Heart left ventricle (tissue), 16 donors: ENCODE measurements at regions of chrX and their contacts with region 1.

Region 1: DNA sequence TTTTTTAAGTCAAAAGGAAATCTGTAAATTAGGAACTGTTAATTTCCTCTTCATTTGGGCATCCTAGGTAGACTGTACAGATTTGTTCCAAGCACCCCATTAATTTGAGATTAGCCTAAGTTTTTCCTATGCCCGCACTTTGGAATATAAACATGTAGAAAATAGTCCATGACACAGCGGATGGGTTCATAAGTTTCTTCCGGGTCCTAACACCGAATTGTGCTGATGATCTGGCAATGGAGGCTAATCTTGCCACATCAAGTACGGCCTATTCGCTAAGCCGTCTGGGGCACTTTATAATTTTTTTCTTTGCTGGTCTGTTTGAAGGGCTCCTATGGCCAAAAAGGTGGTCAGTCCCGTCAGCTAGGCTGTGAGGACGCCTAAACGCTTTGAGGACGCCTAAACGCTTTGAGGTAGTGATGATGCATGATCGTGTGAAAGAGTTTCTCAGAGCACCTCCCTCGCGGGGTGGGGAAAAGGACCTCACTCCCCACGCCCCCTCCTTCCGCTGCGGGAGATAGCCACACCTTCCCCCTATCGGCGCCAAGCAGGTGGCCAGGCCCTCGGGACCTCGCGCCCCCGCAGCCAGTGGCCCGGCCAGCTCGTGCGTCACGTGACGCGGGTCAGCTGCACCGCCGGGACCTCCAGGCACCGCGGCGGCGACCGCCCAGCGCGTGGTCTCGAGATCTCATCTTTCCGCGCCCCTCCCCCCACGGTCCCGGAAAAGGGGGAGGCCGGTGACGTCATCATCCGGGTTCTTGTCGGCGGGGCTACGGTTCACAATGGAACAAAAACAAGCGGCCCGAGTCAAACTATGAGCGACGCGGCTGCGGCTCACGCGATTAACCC is 977 bp upstream of the USP9X start:
- DNase-seq: peak; percentile 95 to 99 (median 96)
- ATAC-seq: peak; percentile 85 to 89 (median 88)
- H3K4me3 ChIP-seq: peak overlapping the region; percentile 52 to 99 (median 90)
- H3K27ac ChIP-seq: peak overlapping the region; percentile 90 to 100 (median 99)
- H3K4me1 ChIP-seq: peaks cover 0 to 35% (median 13%) of the 10 kb centered on the region in 12 donors
- H3K27me3 ChIP-seq: peaks cover 0 to 6% (median 0%) of the 10 kb centered on the region in 9 donors
- CTCF ChIP-seq: no peak
- POLR2A ChIP-seq: peak in 1 of 2 donors; percentile 76

Region 2: GRCh38 chrX:40735325-40736169 is 348.7 kb before region 1 on chrX and contains the start of gene MED14:
- intact Hi-C with region 1: loop called in 1 of 10 experiments (anchors 5 kb)
- DNase-seq: peak; percentile 88 to 92 (median 89)
- ATAC-seq: peak; percentile 98 to 99 (median 98)
- H3K4me3 ChIP-seq: peak within 1 kb of the TSS; percentile 40 to 97 (median 80)
- H3K27ac ChIP-seq: peak within 1 kb of the TSS; percentile 91 to 100 (median 94)
- H3K4me1 ChIP-seq: peaks cover 0 to 28% (median 7%) of the 10 kb centered on the region in 12 donors
- H3K27me3 ChIP-seq: peaks cover 0 to 50% (median 0%) of the 10 kb centered on the region in 9 donors
- CTCF ChIP-seq: peak; percentile 35 to 61 (median 42)
- POLR2A ChIP-seq: peak in 1 of 2 donors; percentile 38
- total RNA-seq, gene MED14: 17.5 to 40.9 (median 27.4) TPM

Region 3: DNA sequence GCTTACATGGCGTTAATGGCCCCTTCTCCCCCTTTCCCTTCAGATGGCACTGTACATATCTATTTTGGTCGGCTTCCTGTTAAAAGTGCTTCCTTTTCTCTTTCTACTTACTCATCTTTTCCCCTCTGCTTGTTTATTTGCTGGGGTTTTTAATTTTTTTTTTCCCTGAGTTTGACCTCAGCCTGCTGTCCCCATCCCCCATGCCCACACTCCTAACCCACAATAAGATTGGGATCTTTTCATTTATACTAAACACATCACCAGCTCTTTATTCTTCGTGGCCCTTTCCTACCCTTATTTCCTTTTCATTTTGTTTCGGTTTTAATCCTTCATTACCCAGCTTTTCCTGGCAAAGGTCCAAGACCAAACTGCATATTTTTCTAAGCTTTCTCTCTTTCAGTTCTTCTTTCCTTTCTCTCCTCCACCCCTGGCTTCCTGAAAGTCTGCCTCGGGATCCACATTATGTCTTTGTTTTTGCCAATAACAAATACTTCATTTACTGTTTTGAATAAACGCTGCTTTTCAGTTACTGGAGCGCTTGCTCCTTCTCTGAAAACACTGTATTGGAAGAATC is 151.0 kb before region 1 on chrX:
- intact Hi-C with region 1: loop called in 1 of 10 experiments (anchors 10 kb)
- DNase-seq: peak in 2 of 5 donors; percentile 21 to 30
- ATAC-seq: peak in 2 of 4 donors; percentile 29 to 60
- H3K4me3 ChIP-seq: peak overlapping the region in 7 of 12 donors; percentile 12 to 43 (median 26)
- H3K27ac ChIP-seq: peak overlapping the region in 10 of 12 donors; percentile 6 to 91 (median 59)
- H3K4me1 ChIP-seq: peaks cover 0 to 28% (median 0%) of the 10 kb centered on the region in 12 donors
- H3K27me3 ChIP-seq: peaks cover 0 to 3% (median 0%) of the 10 kb centered on the region in 9 donors
- CTCF ChIP-seq: no peak
- POLR2A ChIP-seq: no peak

Region 4: GRCh38 chrX:41010188-41010846 is 74.0 kb before region 1 on chrX:
- intact Hi-C with region 1: loop called in 8 of 10 experiments (anchors 1 to 10 kb)
- DNase-seq: peak; percentile 79 to 87 (median 86)
- ATAC-seq: peak; percentile 89 to 97 (median 96)
- H3K4me3 ChIP-seq: peak overlapping the region in 10 of 12 donors; percentile 20 to 52 (median 44)
- H3K27ac ChIP-seq: peak overlapping the region; percentile 63 to 94 (median 86)
- H3K4me1 ChIP-seq: peaks cover 0 to 21% (median 7%) of the 10 kb centered on the region in 12 donors
- H3K27me3 ChIP-seq: peaks cover 0 to 29% (median 0%) of the 10 kb centered on the region in 9 donors
- CTCF ChIP-seq: peak in 7 of 12 donors; percentile 14 to 39 (median 25)
- POLR2A ChIP-seq: no peak

Region 5: DNA sequence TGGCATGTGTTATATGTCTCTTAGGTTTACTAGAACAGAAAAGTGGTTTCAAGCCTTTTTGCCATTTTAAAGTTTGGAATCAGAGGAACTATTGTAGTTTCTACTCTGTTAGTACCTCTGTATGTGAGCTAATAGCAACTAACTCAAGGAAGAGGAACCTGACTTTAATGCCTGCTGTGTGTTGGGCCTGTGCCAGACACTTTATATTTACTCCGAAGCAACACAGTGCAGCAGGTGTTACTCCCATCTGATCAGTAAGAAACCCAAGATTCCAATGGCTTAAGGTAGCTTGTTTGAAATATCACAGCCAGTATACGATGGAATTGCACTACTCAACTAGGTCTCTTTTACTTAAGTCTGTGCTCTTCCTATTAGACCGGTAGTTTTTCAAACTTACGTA is 80.2 kb after region 1 on chrX:
- intact Hi-C with region 1: no loop called
- DNase-seq: no peak
- ATAC-seq: no peak
- H3K4me3 ChIP-seq: no peak overlapping the region
- H3K27ac ChIP-seq: no peak overlapping the region
- H3K4me1 ChIP-seq: no peaks in the 10 kb centered on the region
- H3K27me3 ChIP-seq: no peaks in the 10 kb centered on the region
- CTCF ChIP-seq: no peak
- POLR2A ChIP-seq: no peak

Region 6: GRCh38 chrX:41333744-41334259 is 249.5 kb after region 1 on chrX and contains the start of gene DDX3X:
- intact Hi-C with region 1: loop called in 2 of 10 experiments (anchors 2 to 5 kb)
- DNase-seq: peak; percentile 83 to 94 (median 90)
- ATAC-seq: peak; percentile 87 to 89 (median 88)
- H3K4me3 ChIP-seq: peak within 1 kb of the TSS; percentile 81 to 99 (median 96)
- H3K27ac ChIP-seq: peak within 1 kb of the TSS; percentile 97 to 100 (median 100)
- H3K4me1 ChIP-seq: peaks cover 0 to 55% (median 17%) of the 10 kb centered on the region in 12 donors
- H3K27me3 ChIP-seq: no peaks in the 10 kb centered on the region
- CTCF ChIP-seq: peak in 3 of 12 donors; percentile 17 to 30 (median 20)
- POLR2A ChIP-seq: peak; percentile 47 to 98
- total RNA-seq, gene DDX3X: 128 to 272 (median 178) TPM

Region 7: GRCh38 chrX:41377624-41378023 is 293.4 kb after region 1 on chrX:
- intact Hi-C with region 1: no loop called
- DNase-seq: no peak
- ATAC-seq: no peak
- H3K4me3 ChIP-seq: no peak overlapping the region
- H3K27ac ChIP-seq: no peak overlapping the region
- H3K4me1 ChIP-seq: peaks cover 0 to 3% (median 0%) of the 10 kb centered on the region in 12 donors
- H3K27me3 ChIP-seq: peaks cover 0 to 5% (median 0%) of the 10 kb centered on the region in 9 donors
- CTCF ChIP-seq: no peak
- POLR2A ChIP-seq: no peak

Region 8: GRCh38 chrX:41688835-41689234 is 604.6 kb after region 1 on chrX and contains the start of gene GPR34:
- intact Hi-C with region 1: no loop called
- DNase-seq: no peak
- ATAC-seq: no peak
- H3K4me3 ChIP-seq: peak within 1 kb of the TSS in 5 of 12 donors; percentile 9 to 41 (median 19)
- H3K27ac ChIP-seq: peak within 1 kb of the TSS in 2 of 12 donors; percentile 4 to 42
- H3K4me1 ChIP-seq: peaks cover 0 to 28% (median 2%) of the 10 kb centered on the region in 12 donors
- H3K27me3 ChIP-seq: peaks cover 0 to 7% (median 0%) of the 10 kb centered on the region in 9 donors
- CTCF ChIP-seq: no peak
- POLR2A ChIP-seq: no peak
- total RNA-seq, gene GPR34: 1.7 to 18.4 (median 4.1) TPM